ENCODE measurements at regions of chrX and their contacts with region 1.

Region 1: DNA sequence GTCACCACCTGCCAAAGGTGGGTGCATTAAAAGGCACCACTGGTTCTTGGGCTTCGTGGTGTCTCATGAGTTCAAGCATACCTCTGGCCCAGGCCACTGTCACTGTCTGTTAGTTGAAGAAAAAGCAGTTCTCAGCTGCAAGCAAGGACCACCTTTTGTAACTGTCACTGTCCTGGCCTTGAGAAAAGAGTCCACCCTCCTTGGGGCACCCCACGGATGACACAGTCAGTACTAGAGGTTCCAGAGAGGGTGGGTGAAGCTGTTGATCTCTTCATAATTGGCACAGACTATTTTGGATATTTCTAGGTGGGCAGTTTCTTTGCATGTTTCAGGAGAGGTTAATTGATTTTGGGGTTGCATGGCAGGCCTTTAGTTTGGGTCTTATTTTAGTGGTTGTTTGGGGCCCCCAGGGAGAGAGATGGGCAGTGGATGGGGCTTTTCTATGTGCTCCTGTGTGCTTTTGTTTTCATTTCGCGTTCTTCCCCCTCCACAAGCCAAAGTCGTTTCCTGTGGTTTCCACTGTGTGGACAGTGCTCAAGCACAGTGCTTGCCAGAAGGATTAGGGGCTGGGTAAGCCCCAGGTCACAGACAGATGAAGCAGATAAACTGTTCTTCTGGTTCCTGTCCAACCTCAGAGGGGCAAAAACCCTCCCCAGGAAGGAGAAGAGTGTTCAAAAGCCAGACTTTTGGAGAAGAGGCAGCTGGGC is 156.2 kb upstream of the PPP1R2C start:
- DNase-seq: peak in 5 of 14 experiments; percentile 8 to 68 (median 43)
- ATAC-seq: peak; percentile 24
- H3K4me3 ChIP-seq: no peak overlapping the region
- H3K4me3 Mint-ChIP-seq: peak overlapping the region; percentile 43
- H3K27ac ChIP-seq: peak overlapping the region in 1 of 2 donors; percentile 55
- H3K27ac Mint-ChIP-seq: peak overlapping the region; percentile 70
- H3K4me1 ChIP-seq: peaks cover 21% of the 10 kb centered on the region
- H3K4me1 Mint-ChIP-seq: peaks cover 28% of the 10 kb centered on the region
- H3K27me3 ChIP-seq: no peaks in the 10 kb centered on the region
- H3K27me3 Mint-ChIP-seq: no peaks in the 10 kb centered on the region
- CTCF ChIP-seq: no peak

Region 2: GRCh38 chrX:41906515-41907165 is 1027.5 kb before region 1 on chrX:
- CTCF ChIA-PET with region 1: no interaction called
- POLR2A ChIA-PET with region 1: no interaction called
- intact Hi-C with region 1: loop called in 1 of 2 experiments (anchors 10 kb)
- DNase-seq: no peak
- ATAC-seq: no peak
- H3K4me3 ChIP-seq: no peak overlapping the region
- H3K4me3 Mint-ChIP-seq: peak overlapping the region; percentile 45
- H3K27ac ChIP-seq: no peak overlapping the region
- H3K27ac Mint-ChIP-seq: peak overlapping the region; percentile 55
- H3K4me1 ChIP-seq: peaks cover 17% of the 10 kb centered on the region
- H3K4me1 Mint-ChIP-seq: peaks cover 44% of the 10 kb centered on the region
- H3K27me3 ChIP-seq: no peaks in the 10 kb centered on the region
- H3K27me3 Mint-ChIP-seq: no peaks in the 10 kb centered on the region
- CTCF ChIP-seq: no peak

Region 3: GRCh38 chrX:42967681-42968300 is 33.6 kb after region 1 on chrX:
- CTCF ChIA-PET with region 1: no interaction called
- POLR2A ChIA-PET with region 1: no interaction called
- intact Hi-C with region 1: no loop called
- DNase-seq: peak in 1 of 14 experiments; percentile 11
- ATAC-seq: no peak
- H3K4me3 ChIP-seq: no peak overlapping the region
- H3K4me3 Mint-ChIP-seq: no peak overlapping the region
- H3K27ac ChIP-seq: no peak overlapping the region
- H3K27ac Mint-ChIP-seq: no peak overlapping the region
- H3K4me1 ChIP-seq: no peaks in the 10 kb centered on the region
- H3K4me1 Mint-ChIP-seq: no peaks in the 10 kb centered on the region
- H3K27me3 ChIP-seq: no peaks in the 10 kb centered on the region
- H3K27me3 Mint-ChIP-seq: no peaks in the 10 kb centered on the region
- CTCF ChIP-seq: no peak